ENCODE measurements at regions of chr3 and their contacts with region 1.

Region 1: GRCh38 chr3:108153451-108153981 is 62.7 kb upstream of the CD47 start:
- DNase-seq: peak; percentile 71
- H3K4me3 ChIP-seq: no peak overlapping the region
- H3K27ac ChIP-seq: no peak overlapping the region
- H3K4me1 ChIP-seq: no peaks in the 10 kb centered on the region
- H3K27me3 ChIP-seq: no peaks in the 10 kb centered on the region
- CTCF ChIP-seq: peak; percentile 27

Region 2: DNA sequence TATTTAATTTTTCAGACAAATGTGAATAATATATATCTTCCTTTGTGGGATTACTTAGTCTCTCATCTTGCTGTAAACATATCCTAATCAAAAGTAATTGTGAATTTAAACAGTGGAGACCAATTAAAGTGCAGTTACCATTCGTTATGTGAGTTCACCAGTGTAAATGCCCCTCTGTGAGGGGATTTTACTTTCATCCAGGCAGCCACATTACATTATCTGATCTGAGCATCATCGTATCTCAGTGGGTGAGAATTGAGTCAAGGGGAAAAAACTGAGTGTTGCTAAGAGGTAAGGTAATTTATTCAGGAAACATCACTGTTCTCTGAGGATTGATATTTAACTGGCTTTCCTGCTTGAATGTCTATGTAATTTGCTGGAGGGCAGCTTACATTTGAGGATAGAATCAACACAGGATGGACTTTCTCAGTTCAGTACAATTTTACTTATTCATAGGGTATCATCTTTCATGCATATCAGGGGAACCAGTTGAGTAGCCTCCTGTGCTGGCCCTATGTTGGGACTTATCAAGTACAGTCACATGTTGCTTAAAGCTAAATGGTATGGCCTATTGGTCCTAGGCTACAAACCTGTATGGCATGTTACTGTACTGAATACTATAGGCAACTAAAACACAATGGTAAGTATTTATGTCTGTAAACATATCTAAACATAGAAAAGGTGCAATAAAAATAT is 282.4 kb before region 1 on chr3:
- intact Hi-C with region 1: no loop called
- DNase-seq: no peak
- H3K4me3 ChIP-seq: no peak overlapping the region
- H3K27ac ChIP-seq: no peak overlapping the region
- H3K4me1 ChIP-seq: no peaks in the 10 kb centered on the region
- H3K27me3 ChIP-seq: no peaks in the 10 kb centered on the region
- CTCF ChIP-seq: no peak

Region 3: DNA sequence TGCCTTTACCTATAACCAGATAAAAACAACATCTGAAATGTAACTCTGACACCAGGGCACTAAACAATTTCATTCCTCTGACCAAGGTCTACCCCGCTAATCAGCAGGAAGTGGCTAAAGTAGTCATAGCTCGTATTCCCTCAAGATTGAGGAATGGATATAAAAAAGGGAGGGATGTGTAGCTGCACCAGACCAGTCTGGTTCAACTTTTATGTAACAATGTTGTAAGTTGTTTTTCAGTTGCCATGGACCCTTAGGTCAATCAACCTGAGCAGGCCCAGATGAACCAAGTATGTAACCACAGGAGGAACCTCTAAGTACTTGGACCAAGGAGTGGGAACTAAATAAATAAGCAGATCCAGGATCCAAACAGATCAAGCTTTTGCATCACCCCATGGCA is 97.1 kb after region 1 on chr3:
- intact Hi-C with region 1: no loop called
- DNase-seq: no peak
- H3K4me3 ChIP-seq: no peak overlapping the region
- H3K27ac ChIP-seq: peak overlapping the region; percentile 39
- H3K4me1 ChIP-seq: no peaks in the 10 kb centered on the region
- H3K27me3 ChIP-seq: no peaks in the 10 kb centered on the region
- CTCF ChIP-seq: no peak

Region 4: DNA sequence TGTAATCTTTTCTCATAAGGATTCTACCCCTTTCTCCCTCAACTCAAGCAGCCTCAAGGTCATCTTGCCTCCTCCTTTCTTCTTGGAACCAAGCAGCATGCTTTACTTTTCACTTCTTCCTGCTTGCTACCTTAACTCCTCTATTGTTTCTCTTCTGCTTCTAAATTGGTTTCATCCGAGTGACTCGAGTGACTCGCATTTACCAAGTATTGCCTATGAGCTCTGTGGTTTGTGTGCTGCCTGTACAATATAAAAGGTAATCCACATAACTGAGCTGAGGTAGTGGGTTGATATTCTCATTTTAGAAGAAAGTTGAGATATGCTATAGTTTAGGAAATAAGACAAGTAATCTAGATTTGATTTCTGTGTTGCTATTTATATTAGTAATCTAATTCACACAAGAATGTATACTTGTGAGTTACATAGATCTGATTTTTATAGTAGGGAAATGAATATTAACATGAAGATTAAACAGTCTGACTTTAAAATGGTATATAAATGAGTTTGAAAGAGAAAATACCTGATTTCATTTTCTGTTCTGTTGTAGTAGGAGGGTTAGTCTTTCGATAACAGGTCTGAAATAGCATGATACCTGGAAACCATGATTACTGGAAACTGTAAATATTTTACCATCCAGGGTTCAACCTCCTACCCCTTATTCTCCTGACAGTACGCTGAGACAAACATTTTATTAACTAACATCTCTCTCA is 148.3 kb after region 1 on chr3:
- intact Hi-C with region 1: loop called (anchors 10 kb)
- DNase-seq: no peak
- H3K4me3 ChIP-seq: no peak overlapping the region
- H3K27ac ChIP-seq: no peak overlapping the region
- H3K4me1 ChIP-seq: peaks cover 3% of the 10 kb centered on the region
- H3K27me3 ChIP-seq: no peaks in the 10 kb centered on the region
- CTCF ChIP-seq: no peak

Measured in colonic mucosa (tissue), 4 donors.